ENCODE measurements at regions of chr7 and their contacts with region 1.

Region 1: DNA sequence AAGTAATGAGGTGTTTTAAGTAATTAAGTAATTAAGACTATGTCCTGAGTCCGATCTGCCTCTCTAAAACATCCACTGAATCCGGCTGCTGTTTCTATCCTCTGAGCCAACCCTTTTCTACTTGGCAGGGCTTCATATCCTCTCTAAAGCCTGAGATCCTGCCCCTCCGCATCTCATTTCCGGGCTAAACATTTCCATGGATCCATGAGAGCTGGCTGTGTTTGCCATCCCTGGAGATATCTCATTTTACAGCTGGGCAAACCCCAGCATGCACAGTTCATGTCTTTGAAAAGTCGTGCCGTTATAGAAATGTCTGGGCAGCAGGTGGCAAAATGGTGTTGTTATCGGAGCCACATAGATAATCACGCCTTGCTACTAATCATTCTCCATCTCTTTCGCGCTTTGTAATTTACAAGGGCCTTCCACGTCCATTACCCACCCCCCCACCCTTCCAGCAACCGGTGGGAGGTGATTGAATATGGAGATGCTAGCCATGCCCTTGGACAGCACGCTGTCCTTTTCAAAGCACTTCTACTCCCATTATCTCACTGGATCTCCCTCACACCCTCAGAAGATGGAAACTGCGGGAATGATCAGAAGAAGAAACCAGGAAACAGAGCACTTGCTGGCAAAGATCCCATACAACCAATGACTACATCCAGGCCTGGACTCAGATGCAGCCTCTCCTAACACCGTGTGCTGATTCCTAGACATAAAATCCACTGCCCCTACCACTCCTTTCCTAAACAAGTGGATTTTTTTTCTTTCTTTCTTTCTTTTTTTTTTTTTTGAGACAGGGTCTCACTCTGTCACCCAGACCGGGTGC is 1189.2 kb downstream of the TYW1 start:
- DNase-seq: peak; percentile 88
- H3K4me3 ChIP-seq: no peak overlapping the region
- H3K27ac ChIP-seq: peak overlapping the region; percentile 24
- H3K4me1 ChIP-seq: peaks cover 7% of the 10 kb centered on the region
- H3K27me3 ChIP-seq: no peaks in the 10 kb centered on the region
- CTCF ChIP-seq: peak; percentile 30; the same call in 1 of the 2 replicates

Region 2: DNA sequence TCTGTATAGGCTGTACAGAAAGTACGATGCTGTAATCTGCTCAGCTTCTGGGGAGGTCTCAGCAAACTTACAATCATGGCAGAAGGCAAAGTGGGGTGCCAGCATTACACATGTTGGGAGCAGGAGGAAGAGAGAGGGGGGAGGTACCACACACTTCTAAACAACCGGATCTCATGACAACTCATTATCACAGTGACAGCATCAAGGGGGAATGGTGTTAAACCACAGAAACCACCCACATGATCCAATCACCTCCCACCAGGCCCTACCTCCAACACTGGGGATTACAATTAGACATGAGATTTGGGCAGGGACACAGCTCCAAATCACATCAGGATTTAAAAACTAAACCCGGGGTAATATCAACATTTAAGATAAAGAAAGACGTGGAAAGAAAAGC is 943.7 kb after region 1 on chr7:
- CTCF ChIA-PET with region 1: interaction called, 16 read pairs
- POLR2A ChIA-PET with region 1: no interaction called
- intact Hi-C with region 1: no loop called
- DNase-seq: no peak
- H3K4me3 ChIP-seq: no peak overlapping the region
- H3K27ac ChIP-seq: no peak overlapping the region
- H3K4me1 ChIP-seq: no peaks in the 10 kb centered on the region
- H3K27me3 ChIP-seq: no peaks in the 10 kb centered on the region
- CTCF ChIP-seq: no peak

Measured in A673 (cell line).